Mammary epithelial cell (primary cell): ENCODE measurements at regions of chr2 and their contacts with region 1.

Region 1: GRCh38 chr2:70201831-70202806 is 11.3 kb upstream of the C2orf42 start:
- DNase-seq: peak; percentile 11
- H3K4me3 ChIP-seq: peak overlapping the region in 1 of 3 experiments; percentile 20
- H3K27ac ChIP-seq: no peak overlapping the region
- H3K4me1 ChIP-seq: peaks cover 5% of the 10 kb centered on the region
- H3K27me3 ChIP-seq: no peaks in the 10 kb centered on the region
- CTCF ChIP-seq: no peak

Region 2: DNA sequence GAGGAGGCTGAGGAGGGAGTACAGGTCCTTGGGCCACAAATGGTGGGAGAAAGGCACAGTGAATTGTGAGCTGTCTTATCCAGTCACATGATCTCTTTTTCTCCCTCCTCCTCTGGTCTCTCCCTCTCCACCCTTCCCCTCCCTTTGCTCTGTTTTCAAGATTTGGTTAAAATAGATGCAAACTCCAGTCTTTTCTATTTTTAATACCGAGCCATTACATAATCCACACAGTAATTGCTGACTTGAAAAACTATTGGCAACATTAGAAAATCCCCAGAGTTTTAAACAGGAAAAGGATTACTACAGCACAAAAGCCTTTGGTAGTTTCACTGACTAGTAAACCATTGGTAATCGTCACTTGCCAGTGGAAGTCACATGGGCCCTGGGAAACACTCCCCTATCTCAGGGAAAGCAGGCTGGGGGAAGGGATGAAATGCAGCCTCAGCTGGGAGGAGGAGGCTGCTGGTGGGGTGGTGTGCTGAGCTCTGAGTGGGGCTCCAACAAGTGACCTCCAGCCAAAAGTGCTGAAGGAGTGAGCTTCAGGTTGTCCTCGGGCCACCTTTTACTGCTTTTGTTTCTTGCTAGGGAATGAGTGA is 172.2 kb before region 1 on chr2:
- CTCF ChIA-PET with region 1: interaction called, 14 read pairs
- dilution Hi-C with region 1: no loop called
- in situ Hi-C with region 1: no loop called
- intact Hi-C with region 1: no loop called
- DNase-seq: no peak
- H3K4me3 ChIP-seq: no peak overlapping the region
- H3K27ac ChIP-seq: no peak overlapping the region
- H3K4me1 ChIP-seq: no peaks in the 10 kb centered on the region
- H3K27me3 ChIP-seq: no peaks in the 10 kb centered on the region
- CTCF ChIP-seq: no peak

Region 3: GRCh38 chr2:70104231-70105111 is 97.6 kb before region 1 on chr2:
- CTCF ChIA-PET with region 1: no interaction called
- dilution Hi-C with region 1: loop called (anchors 5 kb)
- in situ Hi-C with region 1: no loop called
- intact Hi-C with region 1: no loop called
- DNase-seq: no peak
- H3K4me3 ChIP-seq: no peak overlapping the region
- H3K27ac ChIP-seq: no peak overlapping the region
- H3K4me1 ChIP-seq: peaks cover 13% of the 10 kb centered on the region
- H3K27me3 ChIP-seq: no peaks in the 10 kb centered on the region
- CTCF ChIP-seq: no peak